ENCODE measurements at regions of chr12 and their contacts with region 1.

Region 1: GRCh38 chr12:70590051-70590450 is 47.2 kb downstream of the PTPRB start:
- DNase-seq: peak; percentile 76
- H3K4me3 ChIP-seq: no peak overlapping the region
- H3K27ac ChIP-seq: no peak overlapping the region
- H3K4me1 ChIP-seq: no peaks in the 10 kb centered on the region
- H3K27me3 ChIP-seq: no peaks in the 10 kb centered on the region
- CTCF ChIP-seq: peak; percentile 81

Region 2: DNA sequence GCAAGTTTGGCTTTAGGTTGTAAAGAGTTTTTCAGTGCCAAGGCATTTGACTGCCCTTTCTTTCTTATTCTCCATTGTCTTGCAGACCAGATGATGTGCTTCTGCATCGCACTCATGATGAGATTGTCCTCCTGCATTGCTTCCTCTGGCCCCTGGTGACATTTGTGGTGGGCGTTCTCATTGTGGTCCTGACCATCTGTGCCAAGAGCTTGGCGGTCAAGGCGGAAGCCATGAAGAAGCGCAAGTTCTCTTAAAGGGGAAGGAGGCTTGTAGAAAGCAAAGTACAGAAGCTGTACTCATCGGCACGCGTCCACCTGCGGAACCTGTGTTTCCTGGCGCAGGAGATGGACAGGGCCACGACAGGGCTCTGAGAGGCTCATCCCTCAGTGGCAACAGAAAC is 159.7 kb before region 1 on chr12:
- intact Hi-C with region 1: no loop called
- DNase-seq: no peak
- H3K4me3 ChIP-seq: no peak overlapping the region
- H3K27ac ChIP-seq: no peak overlapping the region
- H3K4me1 ChIP-seq: no peaks in the 10 kb centered on the region
- H3K27me3 ChIP-seq: no peaks in the 10 kb centered on the region
- CTCF ChIP-seq: no peak

Region 3: DNA sequence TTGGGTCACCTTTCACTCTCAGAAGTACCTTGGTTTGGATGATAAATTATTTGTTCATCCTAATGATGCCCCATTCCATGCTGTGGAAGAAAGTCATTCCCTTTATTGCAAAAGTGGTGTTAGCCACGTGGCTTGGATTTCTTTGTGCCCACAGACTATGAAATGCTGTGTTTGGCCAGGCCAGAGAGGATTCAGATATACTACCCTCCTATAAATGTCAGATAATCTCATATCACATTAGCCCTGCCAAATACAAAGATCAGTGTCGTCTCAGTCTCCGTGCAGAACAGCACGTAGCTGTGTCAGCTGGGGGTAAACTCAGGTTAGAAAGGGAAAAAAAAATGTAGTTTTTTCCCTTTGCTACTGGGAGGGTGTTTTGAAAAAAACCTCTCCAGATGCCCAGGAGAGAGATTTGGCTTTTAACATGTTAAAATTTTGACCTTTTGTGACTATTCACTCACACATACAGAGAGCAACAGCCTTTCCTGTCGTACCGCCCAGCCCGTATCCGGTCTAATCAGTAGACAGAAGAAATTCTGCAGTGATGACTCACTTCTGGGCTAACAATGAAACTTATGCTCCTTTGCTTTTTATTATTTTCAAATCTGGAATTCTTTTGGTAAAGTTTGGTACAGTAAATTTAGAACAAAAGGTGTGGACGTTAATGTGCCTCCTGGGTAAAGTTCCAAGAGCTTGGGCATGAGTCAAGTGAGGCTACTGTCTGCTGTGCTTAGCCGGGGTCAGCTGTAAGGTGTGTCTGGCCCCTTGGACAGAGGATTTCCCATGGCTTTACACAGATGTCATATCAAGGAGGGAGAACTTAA is 55.7 kb after region 1 on chr12:
- intact Hi-C with region 1: no loop called
- DNase-seq: peak; percentile 50
- H3K4me3 ChIP-seq: no peak overlapping the region
- H3K27ac ChIP-seq: peak overlapping the region; percentile 35
- H3K4me1 ChIP-seq: peaks cover 3% of the 10 kb centered on the region
- H3K27me3 ChIP-seq: no peaks in the 10 kb centered on the region
- CTCF ChIP-seq: no peak

Region 4: GRCh38 chr12:70719672-70720420 is 129.8 kb after region 1 on chr12:
- intact Hi-C with region 1: loop called (anchors 2 kb)
- DNase-seq: peak; percentile 38
- H3K4me3 ChIP-seq: no peak overlapping the region
- H3K27ac ChIP-seq: no peak overlapping the region
- H3K4me1 ChIP-seq: no peaks in the 10 kb centered on the region
- H3K27me3 ChIP-seq: no peaks in the 10 kb centered on the region
- CTCF ChIP-seq: peak; percentile 88

Region 5: GRCh38 chr12:70849265-70849960 is 259.4 kb after region 1 on chr12:
- intact Hi-C with region 1: loop called (anchors 10 kb)
- DNase-seq: no peak
- H3K4me3 ChIP-seq: no peak overlapping the region
- H3K27ac ChIP-seq: no peak overlapping the region
- H3K4me1 ChIP-seq: no peaks in the 10 kb centered on the region
- H3K27me3 ChIP-seq: no peaks in the 10 kb centered on the region
- CTCF ChIP-seq: peak; percentile 28

Region 6: DNA sequence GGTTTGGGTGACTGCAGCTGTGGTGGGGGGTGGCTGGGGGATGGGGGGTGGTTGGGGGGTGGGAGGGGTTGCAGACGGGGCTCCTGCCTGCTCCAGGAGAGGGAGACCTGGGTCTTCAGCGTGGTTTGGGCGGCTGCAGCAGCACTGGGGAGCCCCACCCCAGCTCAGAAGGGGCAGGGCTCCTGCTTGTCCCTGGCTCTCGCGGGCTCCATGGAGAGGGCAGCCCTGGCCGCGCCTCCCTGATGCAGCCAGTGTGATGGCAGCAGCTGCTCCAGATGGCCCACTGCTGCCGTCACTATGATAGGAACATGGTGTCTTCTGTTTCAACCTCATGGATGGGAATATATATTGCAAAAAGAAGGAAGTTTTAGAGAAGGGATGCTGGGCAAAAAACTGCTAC is 1705.0 kb after region 1 on chr12:
- intact Hi-C with region 1: no loop called
- DNase-seq: no peak
- H3K4me3 ChIP-seq: no peak overlapping the region
- H3K27ac ChIP-seq: no peak overlapping the region
- H3K4me1 ChIP-seq: no peaks in the 10 kb centered on the region
- H3K27me3 ChIP-seq: no peaks in the 10 kb centered on the region
- CTCF ChIP-seq: no peak

Measured in colonic mucosa (tissue), 4 donors.